ENCODE measurements at regions of chr6 and their contacts with region 1.

Region 1: DNA sequence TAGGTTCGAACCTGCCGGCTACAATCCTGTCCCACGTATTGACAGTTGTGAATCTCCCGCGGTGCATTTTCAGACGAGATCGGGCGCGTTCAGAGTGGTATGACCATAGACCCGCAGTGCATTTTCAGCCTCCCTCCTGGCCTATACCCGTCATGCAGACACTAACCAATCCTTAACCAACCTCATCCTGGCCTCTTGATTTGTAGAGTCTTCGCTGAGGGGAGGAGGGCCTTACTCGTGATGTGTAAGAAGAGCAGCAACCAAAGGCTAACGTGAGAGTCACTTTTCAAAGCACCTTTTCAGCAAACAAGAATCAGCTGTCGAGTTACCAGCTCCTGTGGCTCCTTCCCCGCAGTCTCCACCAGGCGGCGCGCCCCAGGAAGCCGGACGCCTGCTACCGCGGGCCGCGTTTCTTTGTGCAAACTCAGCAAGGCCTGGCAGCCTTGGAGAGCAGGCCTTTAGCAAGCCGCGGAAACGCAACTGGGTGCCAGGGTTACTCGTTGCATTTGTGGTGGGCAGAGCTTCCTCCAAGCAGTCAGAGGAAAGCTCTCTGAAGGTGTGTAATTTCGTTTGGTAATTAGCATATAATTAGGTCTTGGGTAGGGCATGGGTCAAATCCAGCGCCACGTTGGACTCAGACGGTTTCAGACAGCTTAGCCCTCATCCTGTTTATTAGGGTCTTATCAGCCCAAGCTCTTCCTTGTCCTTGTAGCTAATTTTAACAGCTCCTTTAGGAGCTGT is 139.8 kb downstream of the OR2B2 start:
- DNase-seq: peak; percentile 72 to 88 (median 82)
- ATAC-seq: peak; percentile 98
- H3K4me3 ChIP-seq: no peak overlapping the region
- H3K4me3 Mint-ChIP-seq: peak overlapping the region in 6 of 10 donors; percentile 14 to 59 (median 34)
- H3K27ac ChIP-seq: no peak overlapping the region
- H3K27ac Mint-ChIP-seq: peak overlapping the region in 2 of 9 donors; percentile 7 to 8
- H3K4me1 ChIP-seq: peaks cover 3 to 5% of the 10 kb centered on the region in 2 donors
- H3K4me1 Mint-ChIP-seq: peaks cover 6 to 20% (median 7%) of the 10 kb centered on the region in 7 donors
- H3K27me3 ChIP-seq: no peaks in the 10 kb centered on the region
- H3K27me3 Mint-ChIP-seq: peaks cover 1 to 35% (median 10%) of the 10 kb centered on the region in 5 donors

Region 2: GRCh38 chr6:28355743-28356665 is 583.6 kb after region 1 on chr6:
- CTCF ChIA-PET with region 1: no interaction called
- POLR2A ChIA-PET with region 1: no interaction called
- intact Hi-C with region 1: loop called in 1 of 2 experiments (anchors 1 kb)
- DNase-seq: peak; percentile 26 to 69 (median 54)
- ATAC-seq: peak; percentile 92
- H3K4me3 ChIP-seq: peak overlapping the region; percentile 69
- H3K4me3 Mint-ChIP-seq: peak overlapping the region; percentile 78 to 96 (median 92)
- H3K27ac ChIP-seq: no peak overlapping the region
- H3K27ac Mint-ChIP-seq: peak overlapping the region; percentile 21 to 89 (median 62)
- H3K4me1 ChIP-seq: peaks cover 0 to 7% of the 10 kb centered on the region in 2 donors
- H3K4me1 Mint-ChIP-seq: peaks cover 16 to 38% (median 34%) of the 10 kb centered on the region in 7 donors
- H3K27me3 ChIP-seq: no peaks in the 10 kb centered on the region
- H3K27me3 Mint-ChIP-seq: no peaks in the 10 kb centered on the region